Panc1 (cell line): ENCODE measurements at regions of chr11 and their contacts with region 1.

Region 1: DNA sequence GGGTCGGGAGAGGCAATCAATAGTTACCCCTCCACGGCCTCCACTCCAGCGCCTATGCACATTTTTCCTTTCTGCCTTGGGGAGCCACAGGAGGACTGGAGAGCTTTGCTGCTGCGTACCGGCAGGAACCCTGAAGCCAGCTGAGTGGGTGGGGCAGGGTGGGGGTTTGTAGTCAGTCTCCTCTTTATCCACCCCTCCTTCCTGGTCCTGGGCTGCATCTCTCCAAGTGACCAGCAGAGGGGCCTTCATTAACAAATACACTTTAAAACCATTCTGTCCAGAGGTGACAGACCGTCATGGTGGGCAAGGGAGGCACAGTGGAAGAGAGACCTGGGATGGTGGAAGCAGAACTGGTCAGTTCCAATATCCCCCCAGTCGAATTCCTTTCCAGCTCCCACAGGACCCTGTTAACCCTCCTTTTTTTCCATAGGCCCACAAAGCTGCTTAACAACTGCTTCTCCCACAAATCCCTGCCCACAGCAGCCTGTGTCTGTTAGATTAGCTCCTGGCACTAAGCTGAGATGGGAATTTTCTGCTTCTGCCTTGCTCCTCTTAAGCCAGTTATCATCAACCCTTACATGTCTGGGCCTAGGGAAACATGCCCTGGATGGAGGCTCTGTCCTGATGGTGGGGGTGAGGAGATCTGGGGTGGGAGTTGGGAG is 3.9 kb upstream of the ABCG4 start:
- DNase-seq: peak; percentile 52
- ATAC-seq: peak; percentile 91
- H3K4me3 ChIP-seq: peak overlapping the region in 1 of 2 experiments; percentile 15; a peak in 1 of 4 replicates
- H3K27ac ChIP-seq: no peak overlapping the region
- H3K4me1 ChIP-seq: peaks cover 5% of the 10 kb centered on the region; the same call in 1 of the 2 replicates
- H3K27me3 ChIP-seq: no peaks in the 10 kb centered on the region
- CTCF ChIP-seq: peak; percentile 88

Region 2: DNA sequence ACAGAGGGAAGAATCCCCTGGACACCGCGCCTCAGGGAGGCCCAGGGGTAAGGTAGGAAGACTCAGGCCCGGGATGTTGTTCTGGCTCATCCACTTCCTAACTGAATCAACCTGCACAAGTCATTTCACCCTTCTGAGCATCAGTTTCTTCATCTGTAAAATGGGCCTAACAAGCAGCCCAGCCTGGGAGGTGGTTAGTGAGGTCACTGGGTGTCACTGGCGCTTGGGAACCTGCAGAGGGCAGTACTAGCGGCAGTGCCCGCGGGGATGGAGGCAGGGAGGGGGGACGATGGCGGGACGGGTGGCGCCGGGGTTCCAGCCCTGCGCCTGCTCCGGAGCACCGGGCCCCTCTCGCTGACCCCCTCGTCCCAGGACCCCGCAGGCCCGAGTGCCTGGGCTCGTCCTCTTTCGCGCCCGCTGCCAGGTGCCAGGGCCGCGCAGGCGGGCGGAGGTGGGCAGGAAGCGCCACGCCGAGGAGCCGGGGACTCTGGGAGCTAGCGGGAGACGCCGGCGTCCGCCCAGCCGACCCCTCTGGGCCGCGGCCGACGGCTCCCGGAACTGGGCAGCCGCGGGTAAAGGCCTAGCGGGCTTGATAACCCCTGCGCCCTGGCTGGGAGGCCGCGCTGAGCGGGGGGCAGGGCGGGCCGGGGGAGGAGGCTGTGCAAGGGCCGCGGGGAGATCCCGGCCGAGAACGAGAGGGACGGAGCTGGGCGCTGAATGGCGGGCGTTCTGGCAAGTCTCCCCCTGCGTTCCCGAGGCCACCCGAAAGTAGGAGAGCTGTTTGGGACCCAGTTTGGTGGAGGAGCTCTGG is 23.7 kb after region 1 on chr11 and contains the start of gene NLRX1:
- CTCF ChIA-PET with region 1: interaction called, 4 read pairs
- POLR2A ChIA-PET with region 1: interaction called, 13 read pairs
- in situ Hi-C with region 1: no loop called
- intact Hi-C with region 1: no loop called
- DNase-seq: peak; percentile 61
- ATAC-seq: peak; percentile 94
- H3K4me3 ChIP-seq: peak within 1 kb of the TSS; percentile 58 to 88
- H3K27ac ChIP-seq: peak within 1 kb of the TSS; percentile 80
- H3K4me1 ChIP-seq: peaks cover 14% of the 10 kb centered on the region
- H3K27me3 ChIP-seq: no peaks in the 10 kb centered on the region
- CTCF ChIP-seq: peak; percentile 98
- total RNA-seq, gene NLRX1: 25.2 TPM

Region 3: DNA sequence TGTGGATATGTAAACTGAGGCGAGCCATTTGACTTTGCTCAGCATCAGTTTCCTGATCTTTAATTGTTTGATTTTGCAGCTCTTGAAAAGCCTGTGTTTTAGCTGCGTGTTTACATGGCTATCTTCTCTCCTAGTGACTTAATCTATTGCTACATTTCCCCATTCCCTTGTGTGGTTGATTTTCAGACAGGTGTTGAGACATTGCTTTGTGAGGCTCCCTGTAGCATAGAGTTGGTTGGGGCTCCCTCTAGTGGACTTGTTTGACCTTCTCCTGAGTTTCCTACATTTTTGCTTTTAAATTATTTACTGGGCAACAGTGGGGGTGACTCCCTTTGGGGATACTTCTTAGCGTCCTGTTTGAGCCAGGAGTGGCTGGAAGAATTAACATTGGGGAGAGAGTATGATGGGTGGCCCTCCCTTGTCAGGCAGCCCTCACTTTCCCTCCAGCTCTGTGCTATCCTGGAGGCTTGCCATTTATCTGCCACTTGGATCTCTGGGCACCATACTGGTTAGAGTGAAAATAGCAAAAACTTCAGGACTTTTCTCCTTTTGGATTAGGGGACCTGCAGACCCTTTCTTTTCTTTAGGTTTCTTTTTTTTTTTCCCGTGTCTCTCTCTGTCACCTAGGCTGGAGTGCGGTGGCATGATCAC is 52.0 kb after region 1 on chr11:
- CTCF ChIA-PET with region 1: interaction called, 7 read pairs
- POLR2A ChIA-PET with region 1: interaction called, 5 read pairs
- in situ Hi-C with region 1: no loop called
- intact Hi-C with region 1: loop called (anchors 1 kb)
- DNase-seq: peak; percentile 80
- ATAC-seq: peak; percentile 92
- H3K4me3 ChIP-seq: no peak overlapping the region
- H3K27ac ChIP-seq: no peak overlapping the region
- H3K4me1 ChIP-seq: no peaks in the 10 kb centered on the region
- H3K27me3 ChIP-seq: no peaks in the 10 kb centered on the region
- CTCF ChIP-seq: peak; percentile 94

Region 4: DNA sequence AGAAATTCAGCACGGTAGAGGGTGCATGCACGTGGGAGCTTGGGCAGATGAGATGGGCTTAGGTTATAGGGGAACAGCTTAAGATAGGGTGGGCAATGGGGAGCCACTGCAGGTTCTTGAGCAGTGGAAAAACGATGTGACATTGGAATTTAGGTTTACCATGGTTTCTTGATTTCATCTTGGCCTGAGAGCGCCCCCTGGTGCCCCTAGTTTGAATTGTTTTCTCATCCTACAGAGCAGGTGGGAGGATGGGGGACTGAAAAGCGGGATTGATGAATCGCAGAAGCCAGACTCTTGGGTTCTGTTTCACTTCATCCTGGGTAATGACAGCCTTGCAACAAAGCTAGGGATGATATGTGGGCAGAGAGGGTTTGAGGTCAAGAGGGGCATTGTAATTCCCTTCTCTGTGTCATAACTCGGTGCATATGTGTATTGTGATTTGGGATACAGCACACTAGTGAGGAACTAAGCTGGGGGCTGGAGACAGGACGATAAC is 178.6 kb after region 1 on chr11:
- CTCF ChIA-PET with region 1: interaction called, 5 read pairs
- POLR2A ChIA-PET with region 1: no interaction called
- in situ Hi-C with region 1: no loop called
- intact Hi-C with region 1: loop called (anchors 5 kb)
- DNase-seq: peak; percentile 66
- ATAC-seq: no peak
- H3K4me3 ChIP-seq: no peak overlapping the region
- H3K27ac ChIP-seq: no peak overlapping the region
- H3K4me1 ChIP-seq: peaks cover 28% of the 10 kb centered on the region
- H3K27me3 ChIP-seq: no peaks in the 10 kb centered on the region
- CTCF ChIP-seq: peak; percentile 96